ENCODE measurements at regions of chr18 and their contacts with region 1.

Region 1: GRCh38 chr18:12308386-12309100 is 502 bp downstream of the TUBB6 start:
- DNase-seq: peak; percentile 22
- H3K4me3 ChIP-seq: peak overlapping the region; percentile 40 to 66
- H3K27ac ChIP-seq: peak overlapping the region; percentile 82 to 83
- H3K4me1 ChIP-seq: no peaks in the 10 kb centered on the region
- H3K27me3 ChIP-seq: no peaks in the 10 kb centered on the region
- CTCF ChIP-seq: no peak
- POLR2A ChIP-seq: peak; percentile 46

Region 2: DNA sequence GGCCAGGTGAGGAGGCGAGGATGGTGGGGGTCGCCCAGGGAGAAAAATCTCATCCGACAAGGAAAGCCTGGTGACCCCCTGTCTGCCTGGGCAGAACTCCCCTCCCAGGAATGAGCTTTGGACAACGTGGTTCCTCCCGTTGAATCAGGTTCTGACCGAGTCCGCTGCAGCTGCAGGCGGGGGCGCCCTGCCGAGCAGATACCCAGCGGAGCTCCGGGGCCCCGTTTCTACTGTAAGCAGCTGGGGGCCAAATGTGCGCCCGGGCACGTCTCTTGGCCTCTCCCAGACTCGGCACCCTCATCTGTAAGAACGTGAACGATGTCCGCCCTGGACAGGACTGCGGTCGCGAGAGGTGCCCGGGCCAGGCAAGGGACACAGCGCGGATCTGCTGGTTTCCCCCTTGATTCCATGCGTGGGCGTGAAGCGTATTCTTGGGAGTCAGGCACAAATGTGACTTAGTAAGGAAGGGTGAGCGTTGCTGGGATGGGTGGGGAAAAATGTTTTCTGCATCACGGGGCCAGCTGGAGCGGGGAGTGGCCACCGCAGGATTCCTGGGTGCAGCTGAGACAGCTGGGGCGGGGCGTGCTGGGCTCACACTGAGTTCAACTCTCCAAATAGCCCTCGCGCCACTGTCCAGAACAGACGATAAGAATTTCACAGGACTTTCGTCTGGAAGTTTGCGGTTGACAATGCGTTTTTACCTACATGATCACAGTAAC is 20.7 kb before region 1 on chr18:
- intact Hi-C with region 1: loop called (anchors 1 kb)
- DNase-seq: peak; percentile 47
- H3K4me3 ChIP-seq: peak overlapping the region; percentile 30 to 33
- H3K27ac ChIP-seq: peak overlapping the region; percentile 65 to 75
- H3K4me1 ChIP-seq: no peaks in the 10 kb centered on the region
- H3K27me3 ChIP-seq: no peaks in the 10 kb centered on the region
- CTCF ChIP-seq: no peak
- POLR2A ChIP-seq: peak; percentile 63